Naive thymus-derived CD4-positive, alpha-beta T cell (primary cell): ENCODE measurements at regions of chr11 and their contacts with region 1.

Region 1: GRCh38 chr11:22690871-22691270 is 24.5 kb downstream of the GAS2 start:
- DNase-seq: peak in 7 of 9 donors; percentile 43 to 74 (median 65)
- ATAC-seq: peak; percentile 91
- H3K4me3 ChIP-seq: peak overlapping the region; percentile 45
- H3K4me3 Mint-ChIP-seq: peak overlapping the region; percentile 48 to 94 (median 84)
- H3K27ac ChIP-seq: peak overlapping the region; percentile 66
- H3K27ac Mint-ChIP-seq: peak overlapping the region; percentile 10 to 97 (median 94)
- H3K4me1 ChIP-seq: peaks cover 0 to 9% of the 10 kb centered on the region in 2 donors
- H3K4me1 Mint-ChIP-seq: peaks cover 5 to 41% (median 29%) of the 10 kb centered on the region in 7 donors
- H3K27me3 ChIP-seq: no peaks in the 10 kb centered on the region
- H3K27me3 Mint-ChIP-seq: no peaks in the 10 kb centered on the region

Region 2: GRCh38 chr11:22304337-22304961 is 386.4 kb before region 1 on chr11:
- CTCF ChIA-PET with region 1: no interaction called
- POLR2A ChIA-PET with region 1: no interaction called
- intact Hi-C with region 1: no loop called
- DNase-seq: peak in 5 of 9 donors; percentile 6 to 19 (median 13)
- ATAC-seq: peak; percentile 48
- H3K4me3 ChIP-seq: no peak overlapping the region
- H3K4me3 Mint-ChIP-seq: no peak overlapping the region
- H3K27ac ChIP-seq: no peak overlapping the region
- H3K27ac Mint-ChIP-seq: no peak overlapping the region
- H3K4me1 ChIP-seq: no peaks in the 10 kb centered on the region
- H3K4me1 Mint-ChIP-seq: no peaks in the 10 kb centered on the region
- H3K27me3 ChIP-seq: peaks cover 0 to 4% of the 10 kb centered on the region in 2 donors
- H3K27me3 Mint-ChIP-seq: peaks cover 2 to 31% (median 14%) of the 10 kb centered on the region in 5 donors

Region 3: DNA sequence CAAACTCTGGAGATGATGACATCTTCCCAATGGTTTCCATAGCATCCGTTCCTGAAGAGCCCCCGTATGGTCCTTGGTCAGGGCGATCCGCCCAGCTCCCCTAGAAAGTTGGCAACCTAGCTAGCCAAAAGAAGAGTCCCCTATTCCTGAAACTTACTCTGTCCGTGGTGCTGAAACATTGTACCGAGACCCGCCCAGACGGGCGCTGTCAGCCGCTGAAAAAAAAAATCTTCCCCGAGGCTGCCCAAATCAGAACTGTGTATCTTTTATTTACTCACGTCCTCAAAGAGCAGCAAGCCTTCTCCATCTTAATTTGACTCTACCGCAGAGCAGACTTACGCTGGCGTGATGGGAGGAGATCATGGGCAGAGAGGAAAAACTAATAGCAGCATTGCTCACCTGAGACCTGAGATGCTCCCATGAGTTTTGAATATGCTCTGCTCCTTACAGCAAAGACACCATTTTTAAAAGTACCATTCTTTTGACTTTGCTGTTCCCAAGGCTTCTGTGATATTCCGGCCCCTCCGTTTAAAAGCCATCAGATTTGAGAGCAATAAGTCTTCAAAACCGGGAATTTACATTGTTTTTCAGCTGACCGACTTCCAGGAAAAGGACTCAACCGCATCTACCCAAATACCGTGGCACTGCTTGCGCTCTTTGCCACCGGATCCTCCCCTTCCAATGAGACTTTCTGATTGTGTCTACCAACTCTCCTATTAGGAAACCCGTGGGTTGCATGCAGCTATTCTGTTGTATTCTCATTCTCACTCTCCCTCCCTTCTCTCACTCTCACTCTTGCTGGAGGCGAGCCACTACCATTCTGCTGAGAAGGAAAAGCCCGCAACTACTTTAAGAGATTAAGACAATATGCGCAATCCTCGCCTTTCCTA is 353.0 kb before region 1 on chr11 and contains the start of gene SLC17A6:
- CTCF ChIA-PET with region 1: no interaction called
- POLR2A ChIA-PET with region 1: no interaction called
- intact Hi-C with region 1: no loop called
- DNase-seq: peak in 2 of 9 donors; percentile 12 to 31
- ATAC-seq: no peak
- H3K4me3 ChIP-seq: no peak within 1 kb of the TSS
- H3K4me3 Mint-ChIP-seq: no peak within 1 kb of the TSS
- H3K27ac ChIP-seq: no peak within 1 kb of the TSS
- H3K27ac Mint-ChIP-seq: no peak within 1 kb of the TSS
- H3K4me1 ChIP-seq: peaks cover 0 to 3% of the 10 kb centered on the region in 2 donors
- H3K4me1 Mint-ChIP-seq: peaks cover 7 to 21% (median 12%) of the 10 kb centered on the region in 7 donors
- H3K27me3 ChIP-seq: peaks cover 4 to 15% of the 10 kb centered on the region in 2 donors
- H3K27me3 Mint-ChIP-seq: peaks cover 55 to 73% (median 61%) of the 10 kb centered on the region in 5 donors
- total RNA-seq, gene SLC17A6: not detected

Region 4: GRCh38 chr11:22521226-22521625 is 169.6 kb before region 1 on chr11:
- CTCF ChIA-PET with region 1: no interaction called
- POLR2A ChIA-PET with region 1: no interaction called
- intact Hi-C with region 1: no loop called
- DNase-seq: no peak
- ATAC-seq: no peak
- H3K4me3 ChIP-seq: no peak overlapping the region
- H3K4me3 Mint-ChIP-seq: no peak overlapping the region
- H3K27ac ChIP-seq: no peak overlapping the region
- H3K27ac Mint-ChIP-seq: no peak overlapping the region
- H3K4me1 ChIP-seq: no peaks in the 10 kb centered on the region
- H3K4me1 Mint-ChIP-seq: no peaks in the 10 kb centered on the region
- H3K27me3 ChIP-seq: no peaks in the 10 kb centered on the region
- H3K27me3 Mint-ChIP-seq: peaks cover 0 to 7% (median 6%) of the 10 kb centered on the region in 5 donors

Region 5: DNA sequence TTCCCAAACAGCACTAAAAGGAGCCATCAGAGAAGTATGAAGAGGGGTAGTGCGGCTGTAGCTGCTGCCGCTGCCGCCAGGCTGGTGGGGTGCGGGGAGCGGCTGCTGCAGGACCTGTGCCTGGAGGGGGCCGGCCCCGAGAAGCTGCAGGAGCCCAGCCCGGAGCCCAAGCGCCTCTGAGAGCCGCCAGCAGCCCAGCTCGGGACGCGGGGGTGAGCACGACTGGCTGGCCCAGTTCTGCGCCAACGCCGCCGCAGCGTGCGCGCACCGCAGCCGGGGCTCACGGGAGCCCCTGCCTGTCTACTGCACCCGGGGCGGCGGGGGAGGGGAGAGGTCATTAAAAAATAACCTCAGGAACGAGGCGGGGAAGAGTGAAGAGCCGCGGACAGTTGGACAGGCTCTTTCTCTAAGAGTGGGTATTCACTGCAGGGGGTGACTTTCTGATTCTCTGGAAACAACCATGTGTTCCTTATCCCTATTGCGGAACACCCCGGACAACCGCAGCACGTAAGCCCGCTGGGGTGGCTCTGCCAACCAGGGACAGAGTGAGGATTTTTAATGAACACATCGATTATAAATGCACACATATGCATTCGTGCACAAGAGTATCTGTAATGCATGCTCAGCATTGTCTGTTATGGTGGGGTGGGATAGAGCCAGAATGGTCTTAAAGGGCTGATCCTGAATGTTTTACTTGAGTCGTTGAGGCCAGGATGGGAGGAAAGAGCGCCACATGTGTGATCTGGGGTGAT is 24.0 kb before region 1 on chr11:
- CTCF ChIA-PET with region 1: no interaction called
- POLR2A ChIA-PET with region 1: interaction called, 4 read pairs
- intact Hi-C with region 1: loop called in 1 of 2 experiments (anchors 2 kb)
- DNase-seq: peak in 4 of 9 donors; percentile 11 to 32 (median 20)
- ATAC-seq: peak; percentile 31
- H3K4me3 ChIP-seq: no peak overlapping the region
- H3K4me3 Mint-ChIP-seq: peak overlapping the region; percentile 49 to 94 (median 73)
- H3K27ac ChIP-seq: no peak overlapping the region
- H3K27ac Mint-ChIP-seq: peak overlapping the region in 1 of 9 donors; percentile 54
- H3K4me1 ChIP-seq: peaks cover 0 to 5% of the 10 kb centered on the region in 2 donors
- H3K4me1 Mint-ChIP-seq: peaks cover 9 to 24% (median 13%) of the 10 kb centered on the region in 7 donors
- H3K27me3 ChIP-seq: peaks cover 5 to 7% of the 10 kb centered on the region in 2 donors
- H3K27me3 Mint-ChIP-seq: peaks cover 60 to 67% (median 66%) of the 10 kb centered on the region in 5 donors

Region 6: GRCh38 chr11:22780952-22781593 is 90.2 kb after region 1 on chr11:
- CTCF ChIA-PET with region 1: no interaction called
- POLR2A ChIA-PET with region 1: no interaction called
- intact Hi-C with region 1: loop called in 1 of 2 experiments (anchors 5 kb)
- DNase-seq: peak in 2 of 9 donors; percentile 1 to 7
- ATAC-seq: peak; percentile 40
- H3K4me3 ChIP-seq: no peak overlapping the region
- H3K4me3 Mint-ChIP-seq: no peak overlapping the region
- H3K27ac ChIP-seq: no peak overlapping the region
- H3K27ac Mint-ChIP-seq: peak overlapping the region in 1 of 9 donors; percentile 14
- H3K4me1 ChIP-seq: no peaks in the 10 kb centered on the region
- H3K4me1 Mint-ChIP-seq: peaks cover 4 to 10% (median 8%) of the 10 kb centered on the region in 7 donors
- H3K27me3 ChIP-seq: no peaks in the 10 kb centered on the region
- H3K27me3 Mint-ChIP-seq: peaks cover 2 to 8% (median 6%) of the 10 kb centered on the region in 5 donors